K562 (cell line): ENCODE measurements at regions of chr20 and their contacts with region 1.

Region 1: GRCh38 chr20:47334022-47334551 is 22.4 kb downstream of the ZMYND8 start:
- DNase-seq: no peak
- ATAC-seq: no peak
- H3K4me3 ChIP-seq: no peak overlapping the region
- H3K27ac ChIP-seq: peak overlapping the region; percentile 47; the same call in 2 of the 3 replicates
- H3K4me1 ChIP-seq: peaks cover 53 to 73% of the 10 kb centered on the region in 2 experiments
- H3K27me3 ChIP-seq: no peaks in the 10 kb centered on the region
- CTCF ChIP-seq: no peak
- EP300 ChIP-seq: no peak
- POLR2A ChIP-seq: no peak; the same call in 1 of the 2 replicates
- RAD21 ChIP-seq: no peak

Region 2: GRCh38 chr20:46905364-46906125 is 428.5 kb before region 1 on chr20:
- CTCF ChIA-PET with region 1: no interaction called
- POLR2A ChIA-PET with region 1: no interaction called
- in situ Hi-C with region 1: no loop called
- intact Hi-C with region 1: no loop called
- DNase-seq: no peak
- ATAC-seq: no peak
- H3K4me3 ChIP-seq: no peak overlapping the region
- H3K27ac ChIP-seq: no peak overlapping the region
- H3K4me1 ChIP-seq: no peaks in the 10 kb centered on the region
- H3K27me3 ChIP-seq: peaks cover 28 to 40% of the 10 kb centered on the region in 2 experiments
- CTCF ChIP-seq: no peak
- EP300 ChIP-seq: no peak
- POLR2A ChIP-seq: no peak
- RAD21 ChIP-seq: no peak

Region 3: DNA sequence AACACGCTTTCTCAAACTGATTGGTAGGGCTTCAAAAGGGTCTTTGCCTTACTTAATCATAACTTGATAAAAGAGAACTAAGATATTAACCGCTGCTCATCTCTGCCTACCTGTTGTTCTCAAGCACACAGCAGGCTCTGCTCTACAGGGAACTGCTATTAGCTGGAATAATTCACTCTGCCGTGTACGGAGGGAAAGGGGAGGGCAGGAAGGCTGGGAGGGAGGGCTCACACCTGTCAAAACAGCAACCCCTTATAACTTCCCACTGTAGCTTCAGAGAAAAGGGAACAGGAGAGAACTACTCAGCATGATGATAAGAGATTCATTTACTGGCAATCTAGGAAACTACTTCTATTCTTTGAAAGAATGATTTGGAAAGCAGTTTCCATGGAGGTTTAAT is 52.7 kb before region 1 on chr20:
- CTCF ChIA-PET with region 1: no interaction called
- POLR2A ChIA-PET with region 1: no interaction called
- in situ Hi-C with region 1: no loop called
- intact Hi-C with region 1: no loop called
- DNase-seq: no peak
- ATAC-seq: no peak
- H3K4me3 ChIP-seq: no peak overlapping the region
- H3K27ac ChIP-seq: no peak overlapping the region
- H3K4me1 ChIP-seq: peaks cover under 1 to 10% of the 10 kb centered on the region in 2 experiments; a peak in 4 of 5 replicates
- H3K27me3 ChIP-seq: no peaks in the 10 kb centered on the region
- CTCF ChIP-seq: no peak
- EP300 ChIP-seq: no peak
- POLR2A ChIP-seq: no peak
- RAD21 ChIP-seq: no peak

Region 4: GRCh38 chr20:47317127-47317895 is 16.8 kb before region 1 on chr20:
- CTCF ChIA-PET with region 1: no interaction called
- POLR2A ChIA-PET with region 1: interaction called, 70 read pairs
- in situ Hi-C with region 1: no loop called
- intact Hi-C with region 1: no loop called
- DNase-seq: peak; percentile 75 to 96 (median 82)
- ATAC-seq: peak; percentile 70
- H3K4me3 ChIP-seq: no peak overlapping the region
- H3K27ac ChIP-seq: peak overlapping the region; percentile 89
- H3K4me1 ChIP-seq: peaks cover 60 to 66% of the 10 kb centered on the region in 2 experiments
- H3K27me3 ChIP-seq: no peaks in the 10 kb centered on the region
- CTCF ChIP-seq: no peak
- EP300 ChIP-seq: peak; percentile 83; the same call in 1 of the 2 replicates
- POLR2A ChIP-seq: peak; percentile 56
- RAD21 ChIP-seq: no peak

Region 5: GRCh38 chr20:47348539-47349142 is 14.6 kb after region 1 on chr20:
- CTCF ChIA-PET with region 1: no interaction called
- POLR2A ChIA-PET with region 1: interaction called, 56 read pairs
- in situ Hi-C with region 1: no loop called
- intact Hi-C with region 1: no loop called
- DNase-seq: no peak
- ATAC-seq: peak; percentile 18
- H3K4me3 ChIP-seq: peak overlapping the region; percentile 65
- H3K27ac ChIP-seq: peak overlapping the region; percentile 97
- H3K4me1 ChIP-seq: peaks cover 23 to 47% of the 10 kb centered on the region in 2 experiments
- H3K27me3 ChIP-seq: no peaks in the 10 kb centered on the region
- CTCF ChIP-seq: no peak
- EP300 ChIP-seq: no peak
- POLR2A ChIP-seq: 0 out of 2 replicates have a peak, but pooled peaks have one; percentile 13
- RAD21 ChIP-seq: no peak